Natural killer cell (primary cell): ENCODE measurements at regions of chr18 and their contacts with region 1.

Region 1: GRCh38 chr18:48813833-48814489 is 136.8 kb downstream of the SMAD7 start:
- DNase-seq: peak; percentile 71 to 89
- ATAC-seq: peak; percentile 52 to 81 (median 74)
- H3K4me3 ChIP-seq: no peak overlapping the region
- H3K4me3 Mint-ChIP-seq: peak overlapping the region; percentile 61
- H3K27ac ChIP-seq: peak overlapping the region; percentile 99
- H3K27ac Mint-ChIP-seq: peak overlapping the region; percentile 97 to 99
- H3K4me1 ChIP-seq: peaks cover 55% of the 10 kb centered on the region
- H3K4me1 Mint-ChIP-seq: peaks cover 60 to 75% of the 10 kb centered on the region in 2 donors
- H3K27me3 ChIP-seq: no peaks in the 10 kb centered on the region
- H3K27me3 Mint-ChIP-seq: no peaks in the 10 kb centered on the region
- CTCF ChIP-seq: no peak

Region 2: DNA sequence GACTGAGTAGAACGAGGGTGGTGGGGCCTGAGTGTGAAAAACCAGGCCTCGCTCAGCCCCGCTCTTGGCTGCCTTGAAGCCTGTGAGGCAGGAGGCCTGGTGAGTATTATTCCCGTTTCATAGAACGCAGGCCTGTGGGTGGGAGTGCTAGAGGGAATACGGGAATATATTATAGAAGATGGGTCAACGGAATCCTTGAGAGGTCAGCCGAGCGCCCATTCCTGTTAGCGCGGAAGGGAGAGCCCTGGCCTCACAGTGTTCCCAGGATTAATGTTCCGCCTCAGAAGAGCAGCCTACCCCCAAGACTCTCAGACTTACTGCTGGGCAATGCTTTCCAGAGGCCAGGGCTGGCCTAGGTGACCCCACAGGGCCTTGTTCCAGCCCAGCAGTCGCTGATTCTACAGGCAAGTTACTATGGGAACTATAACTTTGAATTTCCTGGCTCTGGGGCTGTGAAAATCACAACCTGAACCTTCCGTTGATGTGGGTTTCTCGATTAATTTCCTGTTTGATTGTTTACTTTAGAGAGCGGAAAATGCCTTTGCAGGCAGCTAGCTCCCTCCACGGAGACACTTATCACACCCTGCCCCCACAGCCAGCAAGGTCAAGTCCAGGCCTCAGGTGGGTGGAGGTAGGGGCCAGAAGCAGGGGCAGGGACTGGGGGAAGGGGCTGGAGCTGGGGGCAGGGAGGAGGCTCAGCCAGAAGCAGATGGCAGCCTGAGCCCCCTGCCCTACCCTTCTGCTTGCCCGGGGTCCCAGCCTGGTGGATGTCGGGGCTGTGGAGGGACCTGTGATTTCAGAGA is 28.5 kb after region 1 on chr18:
- intact Hi-C with region 1: loop called (anchors 1 kb)
- DNase-seq: peak; percentile 66 to 85
- ATAC-seq: peak; percentile 73 to 88 (median 83)
- H3K4me3 ChIP-seq: no peak overlapping the region
- H3K4me3 Mint-ChIP-seq: peak overlapping the region; percentile 73
- H3K27ac ChIP-seq: peak overlapping the region; percentile 96
- H3K27ac Mint-ChIP-seq: peak overlapping the region; percentile 94 to 100
- H3K4me1 ChIP-seq: peaks cover 83% of the 10 kb centered on the region
- H3K4me1 Mint-ChIP-seq: peaks cover 85 to 97% of the 10 kb centered on the region in 2 donors
- H3K27me3 ChIP-seq: no peaks in the 10 kb centered on the region
- H3K27me3 Mint-ChIP-seq: no peaks in the 10 kb centered on the region
- CTCF ChIP-seq: no peak

Region 3: DNA sequence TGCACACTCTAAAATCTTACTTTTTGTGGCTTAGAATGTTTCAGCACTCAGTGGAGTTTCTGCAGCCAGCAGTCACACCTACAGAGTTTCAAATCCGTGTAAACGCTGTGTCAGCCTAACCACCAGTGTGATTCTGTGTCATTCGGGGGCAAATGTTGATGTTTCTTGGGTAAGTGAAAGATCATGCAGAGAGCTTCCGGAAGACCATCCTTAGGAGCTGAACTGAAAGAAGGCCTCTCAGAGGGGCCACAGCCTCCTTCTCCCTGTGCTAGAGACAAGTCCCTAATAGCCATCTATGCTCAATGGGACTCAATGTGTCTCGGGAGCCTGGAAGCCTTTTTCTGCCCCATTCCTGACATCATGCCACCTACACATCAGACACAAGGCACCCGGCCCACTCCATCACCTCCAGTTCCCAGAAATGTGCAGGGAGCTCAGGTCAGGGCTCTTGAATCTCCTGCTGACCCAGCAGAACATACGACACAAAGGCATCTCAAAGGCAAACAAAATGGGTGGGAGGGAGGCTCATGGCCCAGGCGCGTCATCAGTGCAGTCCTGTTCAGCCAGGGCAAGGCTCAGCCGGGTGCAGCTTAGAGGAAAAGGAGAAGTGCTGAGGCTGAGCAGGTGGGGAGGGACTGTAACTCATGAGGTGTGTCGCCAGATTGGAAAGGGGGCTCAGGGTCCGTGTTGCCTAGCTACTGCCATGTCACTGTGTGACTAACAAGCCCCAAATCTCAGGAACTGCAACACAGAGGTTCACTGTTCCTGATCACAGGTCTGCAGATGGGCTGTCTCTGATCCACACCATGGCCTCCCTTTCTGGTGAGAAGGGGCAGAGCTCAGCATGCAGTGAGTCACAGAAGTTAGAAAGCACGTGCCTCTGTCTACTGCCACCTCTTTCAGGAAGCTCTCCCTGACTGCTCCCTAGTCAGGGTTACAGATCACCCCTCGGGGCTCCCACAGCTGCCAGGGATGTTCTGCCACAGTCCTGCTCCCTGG is 54.8 kb after region 1 on chr18:
- intact Hi-C with region 1: loop called (anchors 1 kb)
- DNase-seq: peak; percentile 57 to 73
- ATAC-seq: peak; percentile 74 to 91 (median 85)
- H3K4me3 ChIP-seq: no peak overlapping the region
- H3K4me3 Mint-ChIP-seq: peak overlapping the region; percentile 76
- H3K27ac ChIP-seq: peak overlapping the region; percentile 83
- H3K27ac Mint-ChIP-seq: peak overlapping the region; percentile 88 to 92
- H3K4me1 ChIP-seq: peaks cover 56% of the 10 kb centered on the region
- H3K4me1 Mint-ChIP-seq: peaks cover 28 to 47% of the 10 kb centered on the region in 2 donors
- H3K27me3 ChIP-seq: no peaks in the 10 kb centered on the region
- H3K27me3 Mint-ChIP-seq: no peaks in the 10 kb centered on the region
- CTCF ChIP-seq: no peak

Region 4: DNA sequence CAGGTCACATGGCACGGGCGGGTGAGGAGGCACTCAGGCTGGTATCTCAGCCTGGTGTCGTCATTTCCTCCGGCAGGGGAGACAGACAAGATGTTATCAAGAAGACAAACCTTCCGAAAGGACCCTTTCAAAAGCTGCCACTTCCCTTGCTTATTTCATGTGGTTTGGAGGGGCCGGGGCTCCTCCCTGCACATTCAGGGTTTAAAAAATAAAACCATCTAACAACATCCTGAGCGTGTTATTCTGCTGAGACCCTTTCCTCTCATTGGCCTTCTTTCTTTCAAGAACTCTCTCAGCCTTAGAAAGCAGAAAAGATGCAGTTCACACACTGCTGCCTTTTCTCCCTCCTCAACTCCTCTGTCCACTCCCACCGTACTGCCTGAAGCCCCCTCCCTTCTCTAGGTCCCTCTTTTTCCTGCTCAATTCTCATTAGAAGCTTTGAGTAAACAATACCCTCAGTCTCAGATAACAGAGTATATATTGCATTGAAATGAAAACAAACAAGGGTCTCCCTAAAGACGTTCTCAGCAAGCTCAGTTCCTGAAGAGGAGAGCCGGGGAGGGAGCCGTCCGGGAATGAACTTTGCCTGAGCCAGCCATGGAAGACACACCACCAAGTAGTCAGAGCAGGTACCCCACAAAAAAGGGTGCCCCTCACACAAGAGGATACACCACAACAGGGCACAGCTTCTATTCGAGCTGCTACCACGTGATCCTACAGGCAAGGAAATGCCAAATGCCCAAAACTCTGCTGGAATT is 127.1 kb after region 1 on chr18:
- intact Hi-C with region 1: loop called (anchors 1 kb)
- DNase-seq: peak; percentile 76 to 98
- ATAC-seq: peak; percentile 76 to 91 (median 84)
- H3K4me3 ChIP-seq: peak overlapping the region; percentile 1
- H3K4me3 Mint-ChIP-seq: peak overlapping the region; percentile 88
- H3K27ac ChIP-seq: peak overlapping the region; percentile 79
- H3K27ac Mint-ChIP-seq: peak overlapping the region; percentile 95 to 99
- H3K4me1 ChIP-seq: peaks cover 99% of the 10 kb centered on the region
- H3K4me1 Mint-ChIP-seq: peaks cover 89 to 95% of the 10 kb centered on the region in 2 donors
- H3K27me3 ChIP-seq: no peaks in the 10 kb centered on the region
- H3K27me3 Mint-ChIP-seq: no peaks in the 10 kb centered on the region
- CTCF ChIP-seq: no peak

Region 5: DNA sequence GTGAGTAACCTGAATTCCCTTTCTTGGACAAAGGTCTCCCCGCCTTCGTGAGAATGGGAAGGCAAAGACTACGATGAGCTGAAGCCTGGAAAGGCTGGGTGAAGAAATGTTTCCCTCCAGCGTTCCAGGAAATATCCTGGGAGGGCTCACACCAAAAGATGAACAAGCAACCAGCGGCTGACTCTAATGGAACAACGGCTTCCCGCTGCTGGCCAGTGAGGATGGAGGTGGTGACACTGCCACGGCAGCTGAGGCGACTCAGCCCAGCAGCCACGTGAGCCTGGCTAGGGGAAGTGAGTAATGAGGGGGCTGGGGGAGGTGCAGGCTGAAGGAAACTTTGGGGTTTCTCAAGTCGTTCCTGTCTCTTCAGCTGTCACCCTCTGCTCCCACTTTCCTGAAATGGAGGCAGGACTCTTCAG is 241.8 kb after region 1 on chr18:
- intact Hi-C with region 1: loop called (anchors 10 kb)
- DNase-seq: peak; percentile 29 to 67
- ATAC-seq: peak; percentile 57 to 73 (median 70)
- H3K4me3 ChIP-seq: no peak overlapping the region
- H3K4me3 Mint-ChIP-seq: peak overlapping the region; percentile 76
- H3K27ac ChIP-seq: no peak overlapping the region
- H3K27ac Mint-ChIP-seq: peak overlapping the region; percentile 79 to 93
- H3K4me1 ChIP-seq: peaks cover 74% of the 10 kb centered on the region
- H3K4me1 Mint-ChIP-seq: peaks cover 74 to 75% of the 10 kb centered on the region in 2 donors
- H3K27me3 ChIP-seq: no peaks in the 10 kb centered on the region
- H3K27me3 Mint-ChIP-seq: no peaks in the 10 kb centered on the region
- CTCF ChIP-seq: no peak